ENCODE measurements at regions of chr11 and their contacts with region 1.

Region 1: DNA sequence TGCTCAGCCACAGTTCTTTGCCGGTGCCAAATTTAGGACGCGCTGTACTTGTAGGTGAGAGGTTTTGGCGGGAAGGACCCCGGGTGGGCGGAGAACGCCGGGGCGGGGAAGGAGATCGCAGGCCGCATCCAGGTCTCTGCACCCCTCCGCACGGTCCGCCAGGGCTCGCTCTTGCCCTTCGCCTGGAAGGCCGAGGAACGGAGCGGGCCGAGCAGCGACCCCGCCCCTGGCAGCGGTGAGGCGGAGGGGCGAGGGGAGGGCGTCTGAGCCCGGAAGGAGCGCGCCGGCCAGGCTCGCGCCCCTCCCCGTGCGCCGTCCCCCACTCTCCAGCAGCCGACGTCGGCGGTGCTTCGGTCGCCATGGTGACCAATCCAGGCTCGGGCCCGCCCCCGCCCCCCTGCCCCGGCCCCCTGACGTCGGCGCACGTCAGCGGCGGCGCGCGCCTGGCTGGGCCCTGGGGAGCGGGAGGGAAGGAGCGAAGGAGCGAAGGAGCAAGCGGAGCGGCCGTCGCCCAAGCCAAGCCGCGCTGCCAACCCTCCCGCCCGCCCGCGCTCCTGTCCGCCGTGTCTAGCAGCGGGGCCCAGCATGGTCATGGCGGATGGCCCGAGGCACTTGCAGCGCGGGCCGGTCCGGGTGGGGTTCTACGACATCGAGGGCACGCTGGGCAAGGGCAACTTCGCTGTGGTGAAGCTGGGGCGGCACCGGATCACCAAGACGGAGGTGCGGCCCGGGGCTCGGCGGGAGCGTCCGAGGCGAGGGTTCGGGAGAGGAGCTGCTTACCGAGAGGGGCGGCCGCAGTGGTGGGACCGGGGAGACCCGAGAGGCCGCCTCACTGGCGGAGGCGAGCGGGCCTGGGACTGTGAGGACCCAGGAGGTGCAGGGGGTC is at the start of gene SIK2:
- DNase-seq: peak; percentile 91
- H3K4me3 Mint-ChIP-seq: peak within 1 kb of the TSS; percentile 78
- H3K27ac Mint-ChIP-seq: peak within 1 kb of the TSS; percentile 83
- H3K4me1 Mint-ChIP-seq: peaks cover 24% of the 10 kb centered on the region
- H3K27me3 Mint-ChIP-seq: no peaks in the 10 kb centered on the region
- total RNA-seq, gene SIK2: 3.5 to 3.8 TPM

Region 2: GRCh38 chr11:111454561-111455192 is 147.5 kb before region 1 on chr11:
- CTCF ChIA-PET with region 1: interaction called, 3 read pairs
- intact Hi-C with region 1: loop called (anchors 1 kb)
- DNase-seq: peak; percentile 85
- H3K4me3 Mint-ChIP-seq: no peak overlapping the region
- H3K27ac Mint-ChIP-seq: no peak overlapping the region
- H3K4me1 Mint-ChIP-seq: no peaks in the 10 kb centered on the region
- H3K27me3 Mint-ChIP-seq: peaks cover 5% of the 10 kb centered on the region

Region 3: DNA sequence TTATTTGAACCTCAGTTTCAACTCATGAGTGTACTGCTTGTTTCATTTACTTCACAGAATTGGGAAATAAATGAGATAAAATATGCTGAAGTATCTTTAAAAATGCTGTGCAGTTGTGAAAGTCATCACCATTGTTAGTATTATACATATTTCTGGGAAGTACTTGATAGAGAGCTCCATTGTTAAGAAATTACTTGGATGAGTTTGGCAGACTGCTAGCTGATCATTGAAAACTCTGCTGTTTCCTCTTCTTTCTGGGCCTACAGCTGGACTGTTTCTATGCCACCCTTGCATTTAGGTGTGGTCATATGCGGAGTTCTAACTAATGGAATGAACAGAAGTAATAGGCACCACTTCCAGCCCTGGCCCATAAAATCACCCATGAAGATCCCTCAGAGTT is 10.0 kb after region 1 on chr11:
- CTCF ChIA-PET with region 1: interaction called, 11 read pairs
- intact Hi-C with region 1: no loop called
- DNase-seq: no peak
- H3K4me3 Mint-ChIP-seq: no peak overlapping the region
- H3K27ac Mint-ChIP-seq: no peak overlapping the region
- H3K4me1 Mint-ChIP-seq: peaks cover 10% of the 10 kb centered on the region
- H3K27me3 Mint-ChIP-seq: no peaks in the 10 kb centered on the region

Region 4: DNA sequence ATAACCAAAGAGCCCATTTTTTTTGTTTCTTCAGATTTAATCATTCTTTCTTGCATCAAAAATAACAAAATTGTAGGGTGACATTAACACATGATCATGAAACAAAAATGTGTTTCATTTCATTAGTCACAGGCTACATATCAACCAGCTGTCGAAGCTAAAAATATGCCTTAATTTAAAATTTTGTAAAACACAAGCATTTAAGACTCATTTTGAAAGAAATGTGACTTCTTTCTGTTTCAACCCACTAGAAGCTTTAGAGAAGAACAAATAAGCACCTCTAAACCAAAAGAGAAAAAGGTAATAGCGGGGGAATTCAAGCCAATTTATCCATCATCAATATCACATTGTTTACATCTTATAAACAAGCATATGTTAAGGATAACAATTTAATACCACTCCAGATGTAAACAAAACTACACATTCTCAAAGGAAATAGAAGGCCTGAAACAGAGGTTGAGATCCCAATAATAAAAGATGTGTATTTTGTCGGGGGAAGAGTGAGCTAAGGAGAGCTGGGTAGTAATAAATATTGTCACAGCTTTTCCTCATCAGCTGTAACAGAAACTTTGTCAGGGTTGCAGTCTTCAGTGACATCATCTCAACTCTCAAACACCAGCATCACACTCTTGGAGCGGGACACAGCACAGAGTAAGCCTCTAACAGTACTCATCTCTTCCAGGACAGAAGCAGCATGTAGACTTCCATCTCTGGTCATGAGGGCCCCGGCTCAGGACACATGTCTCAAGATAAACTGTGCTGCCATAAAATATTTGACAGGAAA is 227.2 kb after region 1 on chr11:
- CTCF ChIA-PET with region 1: no interaction called
- intact Hi-C with region 1: loop called (anchors 1 kb)
- DNase-seq: peak; percentile 7
- H3K4me3 Mint-ChIP-seq: no peak overlapping the region
- H3K27ac Mint-ChIP-seq: no peak overlapping the region
- H3K4me1 Mint-ChIP-seq: peaks cover 19% of the 10 kb centered on the region
- H3K27me3 Mint-ChIP-seq: no peaks in the 10 kb centered on the region

Region 5: DNA sequence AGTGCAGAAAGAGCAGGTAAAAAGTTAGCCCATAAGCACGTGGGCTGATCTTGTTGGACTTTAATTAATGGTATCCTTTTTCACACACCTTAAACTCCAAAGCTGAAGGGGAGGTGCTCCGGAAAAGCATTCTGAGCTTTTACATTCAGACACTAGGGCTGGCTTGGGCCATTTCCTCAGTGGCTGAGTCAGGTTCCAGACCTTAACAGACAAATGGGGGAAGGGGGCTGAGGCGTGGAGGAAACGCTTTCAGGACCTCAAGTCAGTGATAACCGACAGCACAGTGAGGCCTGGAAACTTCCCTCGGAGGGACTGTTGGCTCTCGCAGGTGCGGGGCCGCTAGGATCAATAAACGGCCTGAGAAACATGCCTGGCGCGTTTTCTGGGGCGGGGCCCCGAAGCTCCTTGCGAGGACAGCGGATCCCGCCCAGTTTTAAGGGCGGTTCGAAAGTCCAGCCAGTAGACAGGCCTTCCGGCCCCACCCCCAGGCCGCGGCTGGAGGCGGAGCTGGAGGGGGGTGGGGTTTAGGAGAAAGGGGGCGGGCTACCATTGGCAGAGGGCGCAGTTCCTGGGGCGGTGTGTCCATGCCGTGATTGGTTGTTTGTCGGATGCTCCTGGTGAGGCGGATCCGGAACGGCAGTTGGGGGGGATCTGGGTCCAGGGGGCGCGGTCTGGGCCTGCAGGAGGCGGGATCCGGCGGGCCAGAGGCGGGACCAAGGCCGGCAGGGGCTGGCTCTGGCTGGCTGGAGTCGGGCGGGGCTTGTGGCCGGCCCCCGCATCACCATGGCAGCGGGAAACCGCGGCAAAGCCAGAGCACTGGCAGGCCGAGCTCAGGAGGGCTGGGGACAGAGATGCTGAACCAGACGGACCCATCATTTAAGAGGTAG is 324.5 kb after region 1 on chr11:
- CTCF ChIA-PET with region 1: interaction called, 3 read pairs
- intact Hi-C with region 1: loop called (anchors 2 kb)
- DNase-seq: peak; percentile 95
- H3K4me3 Mint-ChIP-seq: peak overlapping the region; percentile 82
- H3K27ac Mint-ChIP-seq: peak overlapping the region; percentile 88
- H3K4me1 Mint-ChIP-seq: peaks cover 12% of the 10 kb centered on the region
- H3K27me3 Mint-ChIP-seq: no peaks in the 10 kb centered on the region

Region 6: DNA sequence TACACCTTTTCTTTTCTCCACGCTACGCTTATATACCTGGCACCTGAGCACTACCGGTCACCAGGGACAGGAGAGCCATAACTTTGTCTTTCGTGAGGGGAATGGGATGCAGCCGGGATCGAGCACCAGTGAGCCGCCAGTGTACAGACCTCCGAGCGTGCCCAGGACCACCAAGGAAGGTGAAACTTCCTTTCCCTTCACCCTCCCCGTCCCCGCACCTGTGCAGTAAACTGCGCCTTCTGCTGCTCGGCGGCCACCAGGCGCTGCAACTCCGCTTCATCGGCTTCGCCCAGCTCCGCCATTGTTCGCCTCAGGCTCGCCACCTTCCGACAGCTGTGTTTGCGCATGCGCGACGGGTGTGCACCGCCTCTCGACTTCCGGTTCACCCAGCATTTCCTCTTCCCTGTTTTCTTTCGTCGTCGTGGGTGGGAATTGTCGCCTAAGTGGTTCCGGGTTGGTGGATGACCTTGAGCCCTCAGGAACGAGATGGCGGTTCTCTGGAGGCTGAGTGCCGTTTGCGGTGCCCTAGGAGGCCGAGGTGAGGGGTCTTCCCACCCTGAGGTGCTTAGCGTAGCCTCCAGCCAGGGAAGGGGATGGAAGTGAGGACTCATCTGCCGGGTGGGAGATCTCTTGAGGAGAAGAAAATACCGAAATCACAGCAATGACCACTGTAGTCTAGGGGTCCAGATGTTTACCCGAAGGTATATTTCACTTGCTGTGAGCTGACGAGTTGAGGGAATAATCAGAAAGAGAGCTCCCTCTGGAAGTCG is 484.4 kb after region 1 on chr11 and contains the starts of genes SDHD and TIMM8B:
- CTCF ChIA-PET with region 1: no interaction called
- intact Hi-C with region 1: loop called (anchors 10 kb)
- DNase-seq: peak; percentile 98
- H3K4me3 Mint-ChIP-seq: peak within 1 kb of the TSS; percentile 97
- H3K27ac Mint-ChIP-seq: peak within 1 kb of the TSS; percentile 93
- H3K4me1 Mint-ChIP-seq: peaks cover 67% of the 10 kb centered on the region
- H3K27me3 Mint-ChIP-seq: no peaks in the 10 kb centered on the region
- total RNA-seq, gene SDHD: 101 to 115 TPM
- total RNA-seq, gene TIMM8B: 35.4 to 41.7 TPM